ENCODE measurements at regions of chr11 and their contacts with region 1.

Region 1: DNA sequence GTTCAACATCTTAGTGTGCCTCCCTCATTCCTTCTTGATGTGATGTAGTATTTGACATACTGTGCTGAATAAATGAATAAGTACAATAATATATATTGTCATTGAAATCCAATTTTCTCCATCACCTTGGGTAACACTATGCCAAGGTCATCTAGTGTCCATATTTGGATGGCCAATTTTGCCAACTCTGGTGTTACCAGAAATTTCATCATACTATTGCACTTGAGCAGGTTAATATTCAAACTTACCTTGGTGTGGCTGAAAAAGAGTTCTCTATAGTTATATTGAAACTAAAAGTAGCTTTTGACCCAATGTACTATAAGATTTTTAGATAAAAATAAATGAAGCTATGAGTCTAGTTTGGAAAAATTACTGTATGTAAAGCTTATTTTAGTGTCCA is 98.2 kb upstream of the SLC6A5 start:
- DNase-seq: no peak
- H3K4me3 ChIP-seq: no peak overlapping the region
- H3K27ac ChIP-seq: no peak overlapping the region
- H3K4me1 ChIP-seq: no peaks in the 10 kb centered on the region
- H3K27me3 ChIP-seq: no peaks in the 10 kb centered on the region
- CTCF ChIP-seq: no peak

Region 2: GRCh38 chr11:20110908-20111669 is 390.2 kb before region 1 on chr11:
- dilution Hi-C with region 1: no loop called
- DNase-seq: peak; percentile 79
- H3K4me3 ChIP-seq: no peak overlapping the region
- H3K27ac ChIP-seq: peak overlapping the region; percentile 99
- H3K4me1 ChIP-seq: peaks cover 36% of the 10 kb centered on the region
- H3K27me3 ChIP-seq: no peaks in the 10 kb centered on the region
- CTCF ChIP-seq: peak; percentile 95 to 99 (median 99)

Region 3: DNA sequence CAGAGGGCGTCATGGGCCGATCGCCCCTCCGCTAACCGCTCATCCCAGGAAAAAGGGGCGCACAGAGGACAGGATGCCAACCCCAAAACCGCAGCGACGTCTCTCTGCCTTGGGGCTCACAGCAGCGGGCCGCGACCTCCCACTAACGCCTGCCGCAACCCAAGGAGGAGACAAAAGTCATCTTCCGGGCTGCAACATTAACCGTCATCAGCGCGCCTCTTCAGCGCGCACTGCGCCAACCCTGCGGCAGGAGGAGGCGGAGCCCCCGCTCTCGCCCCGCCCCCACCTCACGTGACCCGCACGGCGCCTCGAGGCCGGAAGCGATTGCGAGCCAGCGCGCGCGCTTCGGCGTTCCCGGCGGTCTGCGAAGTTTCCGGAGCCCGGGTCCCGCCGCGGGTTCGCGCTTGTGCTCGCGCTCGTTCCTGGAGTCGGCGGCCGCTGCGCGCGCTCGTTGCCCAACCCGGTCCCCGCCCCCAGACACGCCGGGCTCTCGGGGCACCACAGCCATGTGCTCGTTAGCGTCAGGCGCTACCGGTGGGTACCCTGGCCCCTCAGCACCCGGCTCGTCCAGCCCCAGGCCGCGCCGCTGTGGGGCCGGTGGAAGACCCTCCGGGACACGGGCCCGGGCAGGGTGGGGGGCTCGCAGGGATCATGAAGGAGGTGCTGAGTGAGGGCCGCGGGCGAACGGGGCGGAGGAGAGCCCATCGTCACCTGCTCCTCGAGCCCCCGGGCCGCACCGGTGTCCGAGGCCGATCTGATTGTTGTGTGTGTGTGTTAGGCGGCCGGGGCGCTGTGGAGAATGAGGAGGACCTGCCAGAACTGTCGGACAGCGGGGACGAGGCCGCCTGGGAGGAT is 113.8 kb before region 1 on chr11 and contains the start of gene PRMT3:
- dilution Hi-C with region 1: no loop called
- DNase-seq: peak; percentile 52
- H3K4me3 ChIP-seq: peak within 1 kb of the TSS; percentile 76 to 98 (median 84)
- H3K27ac ChIP-seq: peak within 1 kb of the TSS; percentile 92
- H3K4me1 ChIP-seq: peaks cover 5% of the 10 kb centered on the region
- H3K27me3 ChIP-seq: no peaks in the 10 kb centered on the region
- CTCF ChIP-seq: peak; percentile 82 to 98 (median 94)
- polyA plus RNA-seq, gene PRMT3: 17.2 to 29.4 TPM (median 18.0 TPM) in 3 replicates

Region 4: DNA sequence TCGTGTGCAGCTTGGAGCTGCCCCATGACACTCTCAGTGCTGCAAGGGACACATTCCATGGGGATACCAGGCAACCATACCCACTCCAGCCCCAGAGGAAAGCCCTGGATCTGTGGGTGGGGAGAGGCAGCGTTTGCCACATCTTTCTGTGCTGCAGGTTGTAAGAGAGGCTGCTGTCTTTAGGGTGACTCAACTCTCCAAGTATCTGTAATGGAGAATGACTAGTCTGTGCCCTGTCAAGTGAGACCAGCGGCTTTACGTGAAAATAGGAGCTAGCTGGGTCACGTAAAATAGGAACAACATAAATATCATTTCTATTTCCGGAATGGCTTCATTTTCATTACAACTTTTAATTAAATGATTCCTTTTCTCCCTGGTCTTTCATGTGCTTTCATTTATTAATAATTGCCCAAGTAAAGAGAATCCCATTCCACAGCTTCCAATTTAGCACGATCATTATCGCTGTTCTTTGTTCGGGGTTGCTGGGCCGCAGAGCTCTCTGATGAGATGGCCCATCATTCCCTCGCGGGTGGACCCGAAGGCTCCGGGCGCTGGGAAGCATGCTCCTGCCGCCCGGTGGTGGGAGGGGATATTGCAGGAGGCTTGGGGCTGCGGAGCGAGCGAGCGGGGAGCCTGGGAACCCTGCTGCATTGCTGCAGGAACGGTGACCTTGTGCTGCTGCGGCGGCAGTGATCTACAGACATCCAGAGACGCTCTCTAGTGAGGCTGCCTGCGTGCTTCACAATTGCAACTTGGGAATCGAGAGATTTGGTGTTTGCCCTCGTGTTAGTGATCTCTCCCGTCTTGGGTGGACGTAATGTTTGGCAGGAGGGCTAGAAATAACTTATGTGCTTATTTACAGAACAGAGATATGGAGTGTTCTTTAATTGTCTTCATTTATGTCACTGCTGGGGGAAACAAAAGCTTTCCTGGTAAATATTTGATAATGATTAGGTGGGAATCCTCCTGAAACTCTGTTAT is 108.8 kb after region 1 on chr11:
- dilution Hi-C with region 1: loop called (anchors 25 kb)
- DNase-seq: no peak
- H3K4me3 ChIP-seq: peak overlapping the region in 2 of 3 experiments; percentile 7 to 31
- H3K27ac ChIP-seq: no peak overlapping the region
- H3K4me1 ChIP-seq: peaks cover 12% of the 10 kb centered on the region
- H3K27me3 ChIP-seq: peaks cover 37% of the 10 kb centered on the region
- CTCF ChIP-seq: peak; percentile 84 to 99 (median 90)

Measured in keratinocyte (primary cell).